Ovary (tissue), 10 donors: ENCODE measurements at regions of chr19 and their contacts with region 1.

Region 1: DNA sequence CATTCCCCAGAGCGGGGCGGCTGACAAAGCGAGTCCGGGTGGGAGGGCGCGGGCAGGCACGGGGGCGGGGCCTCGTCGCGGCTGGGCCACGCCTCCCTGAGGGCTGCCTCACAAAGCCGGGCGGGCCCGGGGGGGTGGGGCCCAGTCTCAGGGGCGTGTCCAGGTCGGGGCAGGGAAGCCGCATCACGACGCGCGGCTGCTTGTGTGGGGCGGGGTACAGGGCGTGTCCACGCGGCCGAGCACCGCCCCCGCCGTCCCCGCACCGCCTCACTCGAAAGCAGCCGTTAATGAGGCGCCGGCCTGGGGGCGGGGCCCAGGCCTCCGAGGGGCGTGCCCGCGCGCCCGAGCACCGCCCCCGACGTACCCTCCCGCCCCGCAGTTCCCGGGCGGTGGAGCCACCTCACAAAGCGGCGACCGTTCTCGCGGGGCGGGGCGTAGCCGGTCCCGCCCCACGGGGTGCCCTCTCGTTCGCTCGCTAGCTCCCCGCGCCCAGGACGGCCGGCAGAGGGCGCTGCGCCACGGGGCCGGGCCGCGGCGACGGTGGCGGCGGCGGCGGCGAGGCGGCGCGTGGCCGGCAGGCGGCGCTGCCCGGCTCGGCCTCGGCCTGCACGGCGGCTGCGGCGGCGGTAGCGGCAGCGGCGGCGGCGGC is at the start of gene CARM1:
- DNase-seq: peak; percentile 99 to 100 (median 100)
- H3K4me3 ChIP-seq: peak within 1 kb of the TSS; percentile 67
- H3K27ac ChIP-seq: peak within 1 kb of the TSS; percentile 70 to 78
- H3K4me1 ChIP-seq: no peaks in the 10 kb centered on the region
- H3K27me3 ChIP-seq: no peaks in the 10 kb centered on the region
- CTCF ChIP-seq: peak; percentile 26 to 97 (median 94)
- EP300 ChIP-seq: no peak
- POLR2A ChIP-seq: no peak
- total RNA-seq, gene CARM1: 10.1 to 42.1 (median 39.8) TPM

Region 2: GRCh38 chr19:10855879-10856522 is 15.1 kb before region 1 on chr19:
- intact Hi-C with region 1: no loop called
- DNase-seq: no peak
- H3K4me3 ChIP-seq: no peak overlapping the region
- H3K27ac ChIP-seq: no peak overlapping the region
- H3K4me1 ChIP-seq: no peaks in the 10 kb centered on the region
- H3K27me3 ChIP-seq: no peaks in the 10 kb centered on the region
- CTCF ChIP-seq: no peak
- EP300 ChIP-seq: no peak
- POLR2A ChIP-seq: no peak

Region 3: GRCh38 chr19:10928525-10929401 is 57.7 kb after region 1 on chr19 and contains the starts of genes TIMM29 and YIPF2:
- intact Hi-C with region 1: loop called in 2 of 4 experiments (anchors 5 to 10 kb)
- DNase-seq: peak; percentile 95 to 98 (median 97)
- H3K4me3 ChIP-seq: peak within 1 kb of the TSS; percentile 93
- H3K27ac ChIP-seq: peak within 1 kb of the TSS; percentile 69 to 70
- H3K4me1 ChIP-seq: peaks cover 15% of the 10 kb centered on the region
- H3K27me3 ChIP-seq: no peaks in the 10 kb centered on the region
- CTCF ChIP-seq: no peak
- EP300 ChIP-seq: no peak
- POLR2A ChIP-seq: peak; percentile 39
- total RNA-seq, gene TIMM29: 14.7 to 22.4 (median 20.0) TPM
- total RNA-seq, gene YIPF2: 31.6 to 66.4 (median 47.0) TPM